HEK293T (cell line): ENCODE measurements at regions of chr7 and their contacts with region 1.

Region 1: DNA sequence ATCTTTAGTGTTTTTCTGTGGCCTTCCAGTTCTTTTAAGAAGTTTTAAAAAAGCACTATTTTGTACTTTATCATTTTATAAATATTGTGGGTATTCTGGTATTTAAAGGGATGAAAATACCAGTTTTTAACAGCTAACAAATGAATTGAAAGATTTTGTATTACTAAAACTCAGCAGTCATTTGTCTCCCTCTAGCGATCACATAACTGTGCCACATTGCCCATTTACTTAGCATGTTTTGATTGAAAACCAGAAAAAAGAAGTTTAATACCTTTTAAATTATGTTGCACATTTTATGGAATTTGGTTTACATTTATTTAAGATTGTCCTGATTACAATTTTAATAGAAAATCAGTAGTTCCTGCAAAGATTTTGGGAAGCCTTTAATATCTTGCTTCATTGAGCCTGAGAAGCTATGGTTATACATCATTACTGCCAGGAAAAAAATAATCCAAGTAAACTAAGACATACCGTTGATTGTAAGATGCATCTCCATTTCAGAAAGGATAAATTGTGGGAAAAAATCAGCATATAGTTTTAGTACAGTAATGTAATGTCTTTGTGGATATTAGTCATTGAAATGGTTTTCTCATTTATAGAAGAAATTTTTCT is 34.9 kb downstream of the TAX1BP1 start:
- DNase-seq: peak; percentile 10

Region 2: GRCh38 chr7:27196287-27196767 is 578.5 kb before region 1 on chr7:
- CTCF ChIA-PET with region 1: interaction called, 11 read pairs
- POLR2A ChIA-PET with region 1: no interaction called
- DNase-seq: no peak

Region 3: GRCh38 chr7:27745064-27745583 is 29.7 kb before region 1 on chr7:
- CTCF ChIA-PET with region 1: interaction called, 20 read pairs
- POLR2A ChIA-PET with region 1: interaction called, 4 read pairs
- DNase-seq: peak; percentile 48